B cell (primary cell): ENCODE measurements at regions of chr2 and their contacts with region 1.

Region 1: DNA sequence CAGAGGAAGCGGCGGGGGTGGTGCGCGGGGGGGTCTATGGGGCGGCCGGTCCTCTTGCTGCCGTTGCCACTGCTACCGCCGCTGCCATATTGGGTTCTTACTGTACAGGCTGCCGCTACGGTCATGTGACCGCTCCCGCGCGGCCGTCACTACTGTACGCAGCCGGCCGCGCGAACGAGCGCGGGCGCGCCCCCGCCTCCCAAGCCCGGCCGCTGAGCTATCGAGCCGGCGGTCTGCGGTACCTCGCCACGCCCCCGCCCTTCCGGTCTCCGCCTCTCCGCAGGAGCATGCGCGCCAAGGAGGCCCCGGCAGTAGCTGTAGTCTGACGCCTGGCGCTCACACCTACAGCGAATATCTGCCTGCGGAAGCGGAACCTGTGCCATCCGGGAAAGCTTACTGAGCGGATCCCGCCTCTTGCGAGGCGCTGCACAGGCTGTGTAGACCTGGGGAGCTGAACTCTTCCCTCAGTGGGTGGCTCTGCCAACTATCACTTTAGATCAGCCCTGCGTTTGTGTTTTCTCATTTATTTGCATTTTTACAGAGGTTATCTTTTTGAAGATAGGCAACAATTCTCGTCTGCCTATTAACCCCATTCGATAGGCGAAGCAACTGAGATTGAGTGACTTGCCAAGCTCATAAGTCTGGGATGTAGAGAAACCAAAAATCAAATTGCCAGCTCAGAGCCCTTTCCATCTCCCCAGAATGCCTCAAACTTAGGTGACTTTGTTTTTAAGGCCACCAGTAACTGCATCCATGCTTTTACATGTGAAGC is at the start of gene ASXL2:
- DNase-seq: peak; percentile 99
- ATAC-seq: peak; percentile 89
- H3K4me3 ChIP-seq: peak within 1 kb of the TSS; percentile 87 to 97 (median 97)
- H3K4me3 Mint-ChIP-seq: peak within 1 kb of the TSS; percentile 98
- H3K27ac ChIP-seq: peak within 1 kb of the TSS; percentile 91 to 94
- H3K27ac Mint-ChIP-seq: peak within 1 kb of the TSS; percentile 99
- H3K4me1 ChIP-seq: peaks cover 13 to 14% of the 10 kb centered on the region in 2 donors
- H3K4me1 Mint-ChIP-seq: peaks cover 34% of the 10 kb centered on the region
- H3K27me3 ChIP-seq: peaks cover 0 to 7% (median 3%) of the 10 kb centered on the region in 4 experiments
- H3K27me3 Mint-ChIP-seq: peaks cover 5% of the 10 kb centered on the region
- CTCF ChIP-seq: no peak
- total RNA-seq, gene ASXL2: 51.5 and 55.0 TPM in 2 replicates

Region 2: DNA sequence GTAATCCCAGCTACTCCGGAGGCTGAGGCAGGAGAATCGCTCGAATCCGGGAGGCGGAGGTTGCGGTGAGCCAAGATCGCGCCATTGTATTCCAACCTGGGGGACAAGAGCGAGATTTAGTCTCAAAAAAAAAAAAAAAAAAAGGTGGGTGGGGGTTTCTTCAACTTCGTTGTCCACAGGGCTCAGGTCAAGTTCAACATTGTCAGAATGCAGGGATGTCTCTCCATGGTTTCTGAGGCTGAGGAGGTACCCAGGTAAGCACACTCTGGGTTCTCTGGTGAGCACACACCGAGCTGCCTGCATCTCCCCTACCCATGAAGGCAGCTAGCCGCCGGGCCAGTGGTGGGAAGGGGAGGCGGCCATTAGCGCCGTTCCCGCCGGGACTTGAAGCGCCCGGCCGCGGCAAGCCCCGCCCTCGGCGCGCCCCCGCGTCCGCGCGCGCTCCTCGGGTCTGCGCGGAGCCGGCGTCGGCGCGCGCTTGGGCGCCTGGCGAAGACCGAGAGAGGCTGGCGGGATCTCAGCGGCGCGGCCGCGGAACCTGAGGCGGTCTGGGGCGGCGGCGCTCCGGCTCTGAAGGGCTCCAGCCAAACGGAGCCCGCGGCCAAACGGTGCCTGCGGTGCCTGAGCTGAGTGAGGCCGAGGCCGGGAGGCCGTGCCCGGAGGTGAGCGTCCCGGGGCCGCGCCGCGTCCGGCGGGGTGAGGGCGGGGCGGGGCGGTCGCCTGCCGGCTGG is 1938.4 kb before region 1 on chr2 and contains the start of gene UBXN2A:
- CTCF ChIA-PET with region 1: no interaction called
- POLR2A ChIA-PET with region 1: no interaction called
- intact Hi-C with region 1: loop called (anchors 2 kb)
- DNase-seq: peak; percentile 91
- ATAC-seq: peak; percentile 84
- H3K4me3 ChIP-seq: peak within 1 kb of the TSS; percentile 65 to 91 (median 80)
- H3K4me3 Mint-ChIP-seq: peak within 1 kb of the TSS; percentile 91
- H3K27ac ChIP-seq: peak within 1 kb of the TSS; percentile 36 to 72
- H3K27ac Mint-ChIP-seq: peak within 1 kb of the TSS; percentile 85
- H3K4me1 ChIP-seq: peaks cover 12 to 18% of the 10 kb centered on the region in 2 donors
- H3K4me1 Mint-ChIP-seq: peaks cover 21% of the 10 kb centered on the region
- H3K27me3 ChIP-seq: no peaks in the 10 kb centered on the region
- H3K27me3 Mint-ChIP-seq: no peaks in the 10 kb centered on the region
- CTCF ChIP-seq: no peak
- total RNA-seq, gene UBXN2A: 13.4 and 14.2 TPM in 2 replicates

Region 3: DNA sequence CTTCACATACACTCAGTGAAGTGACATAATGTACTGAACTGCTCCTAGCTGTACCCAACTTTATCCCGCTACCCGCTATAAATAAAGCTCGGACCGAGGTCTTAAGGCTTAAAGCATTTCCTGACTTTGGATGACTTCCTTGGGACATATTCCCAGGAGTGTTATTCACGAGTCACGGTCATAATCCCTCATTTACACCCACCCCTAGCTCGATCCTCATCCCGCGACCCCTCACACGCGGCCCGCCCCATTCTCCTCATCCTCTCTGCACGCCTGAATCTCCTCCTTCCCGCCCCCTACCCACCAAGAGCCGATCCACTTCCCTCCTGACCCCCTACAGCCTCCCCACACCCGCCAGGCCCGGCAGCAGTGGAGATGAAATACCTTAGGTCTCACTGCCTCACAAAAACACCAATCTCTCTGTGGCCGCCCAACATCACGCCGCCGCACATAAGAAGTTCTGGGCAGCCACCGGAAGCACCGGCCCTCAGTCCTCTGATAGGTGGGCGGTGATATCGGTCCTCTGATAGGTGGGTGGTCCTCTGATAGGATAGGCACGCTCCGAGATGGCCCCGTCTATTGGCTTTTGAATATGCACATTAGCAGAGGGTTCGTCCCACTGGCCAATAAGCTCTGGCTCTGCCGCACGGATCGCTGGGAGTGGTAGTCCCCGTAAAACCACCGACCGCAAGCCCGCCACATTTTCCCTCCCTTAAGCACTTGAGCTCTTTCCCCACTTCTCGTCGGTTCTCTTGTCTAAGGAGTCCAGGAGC is 1831.4 kb before region 1 on chr2 and contains the start of gene WDCP:
- CTCF ChIA-PET with region 1: no interaction called
- POLR2A ChIA-PET with region 1: no interaction called
- intact Hi-C with region 1: loop called (anchors 2 kb)
- DNase-seq: peak; percentile 95
- ATAC-seq: peak; percentile 99
- H3K4me3 ChIP-seq: peak within 1 kb of the TSS; percentile 53 to 92 (median 79)
- H3K4me3 Mint-ChIP-seq: peak within 1 kb of the TSS; percentile 90
- H3K27ac ChIP-seq: peak within 1 kb of the TSS in 1 of 2 donors; percentile 79
- H3K27ac Mint-ChIP-seq: peak within 1 kb of the TSS; percentile 86
- H3K4me1 ChIP-seq: peaks cover 24 to 26% of the 10 kb centered on the region in 2 donors
- H3K4me1 Mint-ChIP-seq: peaks cover 25% of the 10 kb centered on the region
- H3K27me3 ChIP-seq: peaks cover 0 to 20% (median 2%) of the 10 kb centered on the region in 4 experiments
- H3K27me3 Mint-ChIP-seq: no peaks in the 10 kb centered on the region
- CTCF ChIP-seq: no peak
- total RNA-seq, gene WDCP: 21.6 and 22.3 TPM in 2 replicates

Region 4: GRCh38 chr2:25851740-25852503 is 26.6 kb before region 1 on chr2:
- CTCF ChIA-PET with region 1: interaction called, 16 read pairs
- POLR2A ChIA-PET with region 1: no interaction called
- intact Hi-C with region 1: loop called (anchors 1 kb)
- DNase-seq: peak; percentile 71
- ATAC-seq: peak; percentile 95
- H3K4me3 ChIP-seq: no peak overlapping the region
- H3K4me3 Mint-ChIP-seq: peak overlapping the region; percentile 40
- H3K27ac ChIP-seq: peak overlapping the region in 1 of 2 donors; percentile 45
- H3K27ac Mint-ChIP-seq: peak overlapping the region; percentile 39
- H3K4me1 ChIP-seq: peaks cover 11 to 14% of the 10 kb centered on the region in 2 donors
- H3K4me1 Mint-ChIP-seq: peaks cover 32% of the 10 kb centered on the region
- H3K27me3 ChIP-seq: no peaks in the 10 kb centered on the region
- H3K27me3 Mint-ChIP-seq: no peaks in the 10 kb centered on the region
- CTCF ChIP-seq: peak; percentile 83

Region 5: GRCh38 chr2:25982273-25982967 is 103.9 kb after region 1 on chr2 and contains the start of gene KIF3C:
- CTCF ChIA-PET with region 1: no interaction called
- POLR2A ChIA-PET with region 1: no interaction called
- intact Hi-C with region 1: loop called (anchors 1 kb)
- DNase-seq: peak; percentile 76
- ATAC-seq: peak; percentile 87
- H3K4me3 ChIP-seq: peak within 1 kb of the TSS; percentile 36 to 81 (median 70)
- H3K4me3 Mint-ChIP-seq: peak within 1 kb of the TSS; percentile 88
- H3K27ac ChIP-seq: peak within 1 kb of the TSS in 1 of 2 donors; percentile 53
- H3K27ac Mint-ChIP-seq: peak within 1 kb of the TSS; percentile 61
- H3K4me1 ChIP-seq: peaks cover 6 to 14% of the 10 kb centered on the region in 2 donors
- H3K4me1 Mint-ChIP-seq: peaks cover 8% of the 10 kb centered on the region
- H3K27me3 ChIP-seq: peaks cover 0 to 3% (median 0%) of the 10 kb centered on the region in 4 experiments
- H3K27me3 Mint-ChIP-seq: no peaks in the 10 kb centered on the region
- CTCF ChIP-seq: no peak
- total RNA-seq, gene KIF3C: 4.0 and 6.9 TPM in 2 replicates

Region 6: GRCh38 chr2:26785431-26786206 is 907.1 kb after region 1 on chr2 and contains the start of gene CENPA:
- CTCF ChIA-PET with region 1: no interaction called
- POLR2A ChIA-PET with region 1: no interaction called
- intact Hi-C with region 1: loop called (anchors 5 kb)
- DNase-seq: peak; percentile 98
- ATAC-seq: peak; percentile 99
- H3K4me3 ChIP-seq: peak within 1 kb of the TSS; percentile 51 to 81 (median 71)
- H3K4me3 Mint-ChIP-seq: peak within 1 kb of the TSS; percentile 93
- H3K27ac ChIP-seq: peak within 1 kb of the TSS; percentile 27 to 41
- H3K27ac Mint-ChIP-seq: peak within 1 kb of the TSS; percentile 83
- H3K4me1 ChIP-seq: peaks cover 8 to 14% of the 10 kb centered on the region in 2 donors
- H3K4me1 Mint-ChIP-seq: peaks cover 13% of the 10 kb centered on the region
- H3K27me3 ChIP-seq: no peaks in the 10 kb centered on the region
- H3K27me3 Mint-ChIP-seq: peaks cover 3% of the 10 kb centered on the region
- CTCF ChIP-seq: peak; percentile 7
- total RNA-seq, gene CENPA: not detected in 2 replicates